ENCODE measurements at regions of chr16 and their contacts with region 1.

Region 1: GRCh38 chr16:4081521-4082021 is 34.7 kb downstream of the ADCY9 start:
- DNase-seq: peak; percentile 84
- H3K4me3 Mint-ChIP-seq: peak overlapping the region; percentile 35
- H3K27ac Mint-ChIP-seq: peak overlapping the region; percentile 48
- H3K4me1 Mint-ChIP-seq: peaks cover 51% of the 10 kb centered on the region
- H3K27me3 Mint-ChIP-seq: no peaks in the 10 kb centered on the region

Region 2: DNA sequence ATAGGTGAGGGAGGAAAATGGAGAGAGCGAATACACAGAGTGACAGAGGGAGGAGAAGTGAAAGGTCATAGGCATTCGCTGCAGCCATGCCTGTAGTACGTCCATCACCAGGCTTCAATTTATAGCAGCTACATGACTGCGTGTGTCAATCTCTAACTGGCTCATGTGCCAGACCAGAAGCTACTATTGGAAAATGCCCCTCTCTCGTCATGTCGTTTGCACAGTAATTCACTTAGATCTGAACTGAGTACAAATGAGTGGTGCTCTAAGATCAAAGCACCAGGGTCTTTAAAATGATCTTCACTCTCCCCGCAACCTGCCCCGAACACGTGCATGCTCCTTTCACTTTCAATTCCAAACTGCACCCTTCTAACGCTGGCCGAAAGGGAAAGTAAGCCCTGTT is 16.6 kb before region 1 on chr16:
- CTCF ChIA-PET with region 1: interaction called, 3 read pairs
- intact Hi-C with region 1: loop called (anchors 1 kb)
- DNase-seq: peak; percentile 63
- H3K4me3 Mint-ChIP-seq: peak overlapping the region; percentile 75
- H3K27ac Mint-ChIP-seq: peak overlapping the region; percentile 65
- H3K4me1 Mint-ChIP-seq: peaks cover 22% of the 10 kb centered on the region
- H3K27me3 Mint-ChIP-seq: no peaks in the 10 kb centered on the region

Region 3: GRCh38 chr16:4183237-4184036 is 101.9 kb after region 1 on chr16:
- CTCF ChIA-PET with region 1: no interaction called
- intact Hi-C with region 1: loop called (anchors 5 kb)
- DNase-seq: peak; percentile 90
- H3K4me3 Mint-ChIP-seq: peak overlapping the region; percentile 78
- H3K27ac Mint-ChIP-seq: peak overlapping the region; percentile 84
- H3K4me1 Mint-ChIP-seq: peaks cover 7% of the 10 kb centered on the region
- H3K27me3 Mint-ChIP-seq: no peaks in the 10 kb centered on the region